Common myeloid progenitor, CD34-positive (primary cell): ENCODE measurements at regions of chr4 and their contacts with region 1.

Region 1: DNA sequence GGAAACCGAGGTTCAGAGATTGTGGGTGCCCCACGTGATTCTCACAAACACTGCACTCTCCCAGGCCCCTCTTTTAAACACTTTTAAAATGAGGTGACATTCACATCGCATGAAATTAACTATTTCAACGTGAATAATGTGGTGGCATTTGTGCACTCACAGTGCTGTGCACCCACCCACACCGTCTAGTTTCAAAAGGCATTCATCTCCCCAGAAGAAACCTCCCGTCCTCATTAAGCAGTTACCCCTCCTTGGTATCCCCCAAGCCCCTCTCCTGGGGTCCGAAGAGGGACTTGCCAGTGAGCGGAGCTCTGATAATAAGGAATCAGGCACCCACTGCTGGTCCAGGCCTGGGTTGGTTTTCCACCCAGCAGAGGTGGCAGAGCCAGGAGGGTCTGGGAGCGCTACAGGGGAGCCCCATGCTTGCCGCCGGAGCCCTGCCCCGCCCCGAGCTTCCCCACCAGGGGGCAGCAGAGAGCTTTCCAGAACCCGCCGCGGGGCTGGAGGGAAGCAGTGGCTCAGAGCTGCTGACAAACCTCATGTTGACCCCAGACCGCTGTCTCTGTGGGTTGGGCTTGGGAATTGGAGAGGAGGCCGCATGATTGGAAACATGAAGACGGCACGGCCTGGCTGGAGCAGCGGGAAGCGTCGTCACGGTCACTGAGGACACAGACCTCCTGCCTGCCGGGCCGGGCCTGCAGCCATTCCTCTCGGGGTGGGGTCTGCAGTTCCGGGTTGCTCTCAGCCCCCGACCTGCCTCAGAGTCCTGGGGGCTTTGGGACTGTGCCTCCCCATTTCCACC is 27.5 kb upstream of the HTRA3 start:
- DNase-seq: peak; percentile 64 to 83 (median 78)
- H3K4me3 ChIP-seq: no peak overlapping the region
- H3K27ac ChIP-seq: no peak overlapping the region
- H3K4me1 ChIP-seq: peaks cover 0 to 33% (median 20%) of the 10 kb centered on the region in 4 experiments
- H3K27me3 ChIP-seq: no peaks in the 10 kb centered on the region

Region 2: DNA sequence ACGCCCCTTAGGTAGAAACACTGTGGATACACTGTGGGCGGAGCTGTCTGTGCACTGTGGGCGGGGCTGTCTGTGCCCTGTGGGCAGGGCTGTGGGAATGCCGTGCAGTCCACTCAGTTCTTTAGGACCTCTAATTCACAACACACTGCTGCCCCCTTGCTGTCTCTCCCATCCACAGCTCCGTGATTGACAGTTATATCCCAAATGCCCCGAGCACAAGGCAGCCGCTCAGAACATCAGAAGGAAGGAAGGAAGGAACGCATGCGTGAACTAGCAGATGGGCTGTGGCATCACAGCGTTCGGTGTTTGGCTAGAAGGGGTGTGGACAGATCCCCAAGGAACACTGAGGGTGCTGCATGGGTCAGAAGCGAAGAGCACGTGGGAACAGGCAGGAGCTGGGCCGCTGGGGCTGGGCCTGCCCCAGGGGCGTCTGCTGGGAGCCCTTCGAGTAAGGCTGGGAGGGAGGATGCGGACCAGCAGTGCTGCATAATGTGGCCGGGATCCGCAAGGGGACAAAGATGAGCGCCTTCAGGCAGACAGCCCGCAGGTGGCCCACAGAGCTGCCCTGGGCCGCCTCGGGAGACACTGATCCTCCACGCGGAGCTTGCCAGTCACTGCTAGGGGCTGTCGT is 168.7 kb after region 1 on chr4:
- CTCF ChIA-PET with region 1: interaction called, 20 read pairs
- POLR2A ChIA-PET with region 1: interaction called, 4 read pairs
- DNase-seq: peak; percentile 61 to 71 (median 61)
- H3K4me3 ChIP-seq: no peak overlapping the region
- H3K27ac ChIP-seq: no peak overlapping the region
- H3K4me1 ChIP-seq: peaks cover 0 to 12% (median 2%) of the 10 kb centered on the region in 4 experiments
- H3K27me3 ChIP-seq: no peaks in the 10 kb centered on the region